ENCODE measurements at regions of chr9 and their contacts with region 1.

Region 1: GRCh38 chr9:27548055-27548741 is 18.6 kb upstream of the MOB3B start:
- DNase-seq: no peak
- CTCF ChIP-seq: peak; percentile 31

Region 2: GRCh38 chr9:27333241-27334052 is 214.8 kb before region 1 on chr9:
- CTCF ChIA-PET with region 1: interaction called, 41 read pairs
- POLR2A ChIA-PET with region 1: no interaction called
- DNase-seq: peak; percentile 73
- CTCF ChIP-seq: peak; percentile 69

Region 3: GRCh38 chr9:27560457-27560856 is 12.3 kb after region 1 on chr9:
- CTCF ChIA-PET with region 1: interaction called, 14 read pairs
- POLR2A ChIA-PET with region 1: no interaction called
- DNase-seq: no peak
- CTCF ChIP-seq: no peak

Measured in GM10248 (cell line).